ENCODE measurements at regions of chr15 and their contacts with region 1.

Region 1: DNA sequence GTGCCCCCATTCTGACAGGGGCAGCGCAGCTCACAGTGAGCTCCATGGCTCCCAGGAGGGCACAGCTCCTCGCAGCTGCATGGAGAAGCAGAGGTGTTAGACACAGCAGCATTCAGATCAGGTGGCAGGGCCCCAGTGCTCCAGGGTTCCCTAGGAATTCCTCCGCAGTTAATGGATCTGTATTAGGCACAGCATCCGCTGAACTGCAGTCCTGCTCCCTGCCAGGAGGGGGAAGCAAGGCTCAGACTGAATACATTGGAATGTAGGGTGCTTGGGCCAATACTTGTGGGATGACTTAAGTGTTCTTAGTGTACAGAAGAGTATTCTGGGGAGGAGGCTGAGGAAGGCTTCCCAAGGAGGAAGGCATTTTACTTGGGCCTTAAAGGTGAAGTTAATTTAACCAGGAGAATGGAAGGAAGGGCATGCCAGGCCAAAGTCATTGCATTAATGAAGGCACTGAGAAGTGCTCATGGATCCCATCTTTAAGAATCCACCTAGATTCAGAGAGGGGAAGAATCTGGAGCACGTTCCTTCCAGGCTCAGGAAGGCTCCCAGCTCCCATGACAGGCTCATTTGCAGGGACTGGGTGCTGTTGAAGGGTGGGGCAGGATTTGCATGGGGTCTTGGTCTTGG is 111.6 kb downstream of the RAB11A start:
- DNase-seq: peak; percentile 30
- H3K4me3 ChIP-seq: no peak overlapping the region
- H3K27ac ChIP-seq: no peak overlapping the region
- H3K4me1 ChIP-seq: peaks cover 3% of the 10 kb centered on the region
- H3K27me3 ChIP-seq: peaks cover 4% of the 10 kb centered on the region
- CTCF ChIP-seq: peak; percentile 16 to 60 (median 50)
- POLR2A ChIP-seq: no peak

Region 2: GRCh38 chr15:66202526-66202925 is 221.6 kb after region 1 on chr15:
- intact Hi-C with region 1: loop called (anchors 10 kb)
- DNase-seq: no peak
- H3K4me3 ChIP-seq: no peak overlapping the region
- H3K27ac ChIP-seq: no peak overlapping the region
- H3K4me1 ChIP-seq: no peaks in the 10 kb centered on the region
- H3K27me3 ChIP-seq: no peaks in the 10 kb centered on the region
- CTCF ChIP-seq: no peak
- POLR2A ChIP-seq: no peak

Region 3: GRCh38 chr15:66221126-66221525 is 240.2 kb after region 1 on chr15:
- intact Hi-C with region 1: no loop called
- DNase-seq: no peak
- H3K4me3 ChIP-seq: no peak overlapping the region
- H3K27ac ChIP-seq: no peak overlapping the region
- H3K4me1 ChIP-seq: no peaks in the 10 kb centered on the region
- H3K27me3 ChIP-seq: no peaks in the 10 kb centered on the region
- CTCF ChIP-seq: no peak
- POLR2A ChIP-seq: no peak

Region 4: GRCh38 chr15:66287461-66288057 is 306.6 kb after region 1 on chr15:
- intact Hi-C with region 1: loop called (anchors 2 kb)
- DNase-seq: no peak
- H3K4me3 ChIP-seq: no peak overlapping the region
- H3K27ac ChIP-seq: no peak overlapping the region
- H3K4me1 ChIP-seq: no peaks in the 10 kb centered on the region
- H3K27me3 ChIP-seq: no peaks in the 10 kb centered on the region
- CTCF ChIP-seq: peak in 2 of 4 experiments; percentile 43 to 49
- POLR2A ChIP-seq: no peak

Region 5: GRCh38 chr15:66700802-66701421 is 720.0 kb after region 1 on chr15:
- intact Hi-C with region 1: no loop called
- DNase-seq: peak; percentile 96
- H3K4me3 ChIP-seq: peak overlapping the region; percentile 55 to 60
- H3K27ac ChIP-seq: peak overlapping the region; percentile 79 to 82
- H3K4me1 ChIP-seq: no peaks in the 10 kb centered on the region
- H3K27me3 ChIP-seq: no peaks in the 10 kb centered on the region
- CTCF ChIP-seq: no peak
- POLR2A ChIP-seq: peak; percentile 6